WTC11 (cell line): ENCODE measurements at regions of chr19 and their contacts with region 1.

Region 1: DNA sequence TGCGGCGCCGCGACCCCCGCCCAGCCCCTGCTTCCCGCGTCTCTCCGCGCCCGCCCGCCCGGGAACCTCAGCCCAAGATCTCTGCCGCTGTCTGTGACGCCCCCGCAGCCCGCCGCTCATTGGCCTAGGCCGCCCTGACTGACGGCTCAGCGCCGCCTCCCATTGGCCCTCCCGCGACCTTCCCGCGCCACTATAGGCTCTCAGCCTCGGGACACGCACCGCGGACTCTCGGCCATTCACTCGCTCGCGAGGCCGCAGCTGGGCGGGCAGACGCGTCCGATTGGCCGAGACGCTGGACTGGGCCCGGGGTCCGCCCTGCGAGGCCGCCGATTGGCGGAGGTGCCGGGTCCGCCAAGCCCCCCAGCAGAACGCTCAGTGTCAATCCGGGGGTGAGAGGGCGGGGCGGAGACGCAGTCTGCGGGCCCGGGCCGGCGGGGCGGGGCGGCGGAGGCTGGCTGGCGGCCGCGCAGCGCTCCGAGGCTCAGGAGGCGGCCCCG is at the start of gene PRKACA:
- DNase-seq: peak; percentile 99
- ATAC-seq: peak; percentile 94
- H3K4me3 Mint-ChIP-seq: peak within 1 kb of the TSS; percentile 90
- H3K27ac Mint-ChIP-seq: peak within 1 kb of the TSS; percentile 98
- H3K4me1 Mint-ChIP-seq: peaks cover 32% of the 10 kb centered on the region
- H3K27me3 Mint-ChIP-seq: 0 out of 2 replicates have a peak, but pooled peaks cover 7% of the 10 kb centered on the region
- CTCF ChIP-seq: no peak
- total RNA-seq, gene PRKACA: 37.8 to 48.0 TPM (median 41.7 TPM) in 3 replicates

Region 2: GRCh38 chr19:14096272-14096992 is 21.3 kb before region 1 on chr19:
- CTCF ChIA-PET with region 1: interaction called, 19 read pairs
- POLR2A ChIA-PET with region 1: no interaction called
- DNase-seq: no peak
- ATAC-seq: peak; percentile 66
- H3K4me3 Mint-ChIP-seq: no peak overlapping the region
- H3K27ac Mint-ChIP-seq: peak overlapping the region; percentile 9; the same call in 1 of the 2 replicates
- H3K4me1 Mint-ChIP-seq: peaks cover 8% of the 10 kb centered on the region
- H3K27me3 Mint-ChIP-seq: peaks cover 22% of the 10 kb centered on the region
- CTCF ChIP-seq: no peak

Region 3: DNA sequence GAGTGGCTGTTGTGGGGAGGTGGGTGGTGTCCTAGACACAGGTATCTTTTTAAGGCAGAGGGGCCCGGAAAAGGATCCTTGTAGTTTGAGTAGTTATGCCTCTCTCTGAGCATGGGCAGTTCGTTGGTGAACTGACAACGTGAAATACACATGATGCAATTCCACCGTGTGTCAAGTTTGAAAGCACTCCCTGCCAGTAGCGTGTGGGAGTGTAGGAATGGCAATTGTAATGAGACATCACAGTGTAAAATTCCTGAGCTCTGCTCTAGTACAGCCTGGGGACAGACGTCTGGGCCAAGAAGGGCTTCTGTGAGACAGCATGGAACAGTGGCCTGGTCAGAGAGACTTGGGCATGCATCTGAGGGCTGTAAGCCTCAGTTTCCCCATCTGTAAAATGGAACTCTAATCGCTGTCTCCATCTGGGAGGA is 29.1 kb after region 1 on chr19:
- CTCF ChIA-PET with region 1: no interaction called
- POLR2A ChIA-PET with region 1: no interaction called
- DNase-seq: no peak
- ATAC-seq: no peak
- H3K4me3 Mint-ChIP-seq: no peak overlapping the region
- H3K27ac Mint-ChIP-seq: peak overlapping the region; percentile 4; the same call in 1 of the 2 replicates
- H3K4me1 Mint-ChIP-seq: peaks cover 27% of the 10 kb centered on the region
- H3K27me3 Mint-ChIP-seq: no peaks in the 10 kb centered on the region; the same call in 1 of the 2 replicates
- CTCF ChIP-seq: no peak